CD4-positive, alpha-beta T cell (primary cell): ENCODE measurements at regions of chr7 and their contacts with region 1.

Region 1: DNA sequence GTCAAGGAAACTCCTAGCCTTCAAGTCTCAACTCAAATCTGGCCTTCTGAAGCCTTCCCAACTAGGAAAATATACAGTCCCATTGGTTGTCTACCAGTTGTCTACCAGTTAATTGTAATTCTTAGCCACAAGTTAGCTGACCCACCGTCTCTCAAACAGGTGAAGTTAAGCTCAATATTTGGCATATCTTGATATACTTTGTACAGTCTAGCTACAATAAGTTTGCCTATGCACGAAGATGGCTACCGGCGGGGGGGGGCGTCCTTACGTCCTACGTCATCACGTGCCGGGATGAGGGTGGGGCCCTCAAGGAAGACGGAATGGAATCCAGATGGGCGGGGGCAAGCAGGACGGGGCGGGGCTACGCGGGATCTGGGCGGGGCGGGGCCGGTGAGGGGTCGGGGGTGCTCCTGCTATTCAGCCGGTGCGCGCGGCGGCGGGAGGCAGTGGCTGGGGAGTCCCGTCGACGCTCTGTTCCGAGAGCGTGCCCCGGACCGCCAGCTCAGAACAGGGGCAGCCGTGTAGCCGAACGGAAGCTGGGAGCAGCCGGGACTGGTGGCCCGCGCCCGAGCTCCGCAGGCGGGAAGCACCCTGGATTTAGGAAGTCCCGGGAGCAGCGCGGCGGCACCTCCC is at the start of gene AHR:
- DNase-seq: peak; percentile 81 to 95 (median 86)
- ATAC-seq: peak; percentile 77
- H3K4me3 ChIP-seq: peak within 1 kb of the TSS; percentile 84
- H3K4me3 Mint-ChIP-seq: peak within 1 kb of the TSS; percentile 97
- H3K27ac ChIP-seq: peak within 1 kb of the TSS; percentile 74 to 91
- H3K27ac Mint-ChIP-seq: peak within 1 kb of the TSS; percentile 91
- H3K4me1 ChIP-seq: peaks cover 9% of the 10 kb centered on the region
- H3K4me1 Mint-ChIP-seq: peaks cover 39% of the 10 kb centered on the region
- H3K27me3 ChIP-seq: no peaks in the 10 kb centered on the region
- H3K27me3 Mint-ChIP-seq: no peaks in the 10 kb centered on the region
- CTCF ChIP-seq: no peak
- total RNA-seq, gene AHR: 95.2 to 95.7 TPM

Region 2: GRCh38 chr7:16645593-16646471 is 652.5 kb before region 1 on chr7 and contains the starts of genes ANKMY2 and BZW2:
- CTCF ChIA-PET with region 1: no interaction called
- POLR2A ChIA-PET with region 1: interaction called, 12 read pairs
- intact Hi-C with region 1: loop called (anchors 5 kb)
- DNase-seq: peak; percentile 85 to 98 (median 92)
- ATAC-seq: peak; percentile 85
- H3K4me3 ChIP-seq: peak within 1 kb of the TSS; percentile 89
- H3K4me3 Mint-ChIP-seq: peak within 1 kb of the TSS; percentile 99
- H3K27ac ChIP-seq: peak within 1 kb of the TSS; percentile 75 to 88
- H3K27ac Mint-ChIP-seq: peak within 1 kb of the TSS; percentile 90
- H3K4me1 ChIP-seq: peaks cover 28% of the 10 kb centered on the region
- H3K4me1 Mint-ChIP-seq: peaks cover 78% of the 10 kb centered on the region
- H3K27me3 ChIP-seq: no peaks in the 10 kb centered on the region
- H3K27me3 Mint-ChIP-seq: no peaks in the 10 kb centered on the region
- CTCF ChIP-seq: no peak
- total RNA-seq, gene ANKMY2: 3.3 to 5.1 TPM
- total RNA-seq, gene BZW2: 15.1 to 17.2 TPM

Region 3: GRCh38 chr7:16982640-16983350 is 315.5 kb before region 1 on chr7:
- CTCF ChIA-PET with region 1: interaction called, 13 read pairs
- POLR2A ChIA-PET with region 1: no interaction called
- intact Hi-C with region 1: loop called (anchors 1 to 5 kb)
- DNase-seq: peak in 10 of 14 experiments; percentile 1 to 68 (median 8)
- ATAC-seq: no peak
- H3K4me3 ChIP-seq: no peak overlapping the region
- H3K4me3 Mint-ChIP-seq: no peak overlapping the region
- H3K27ac ChIP-seq: no peak overlapping the region
- H3K27ac Mint-ChIP-seq: no peak overlapping the region
- H3K4me1 ChIP-seq: no peaks in the 10 kb centered on the region
- H3K4me1 Mint-ChIP-seq: no peaks in the 10 kb centered on the region
- H3K27me3 ChIP-seq: no peaks in the 10 kb centered on the region
- H3K27me3 Mint-ChIP-seq: peaks cover 5% of the 10 kb centered on the region
- CTCF ChIP-seq: peak; percentile 97

Region 4: DNA sequence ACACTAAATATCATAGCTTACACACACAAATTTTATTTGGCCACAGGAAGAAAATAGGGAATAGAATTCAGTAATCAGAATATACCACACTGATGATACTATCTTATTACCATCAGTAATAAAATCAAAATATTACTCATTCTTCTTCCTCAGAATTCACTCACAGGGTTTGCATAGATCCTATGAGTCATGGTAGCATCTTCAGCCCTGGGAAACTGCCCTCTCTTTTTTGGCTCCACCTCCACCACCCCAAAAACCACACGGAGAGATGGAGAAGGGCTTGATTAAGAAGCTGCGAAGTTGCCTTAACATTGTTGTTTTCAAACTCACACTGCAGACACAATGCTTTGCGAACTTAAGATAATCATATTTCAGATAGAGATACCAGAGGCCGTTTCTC is 154.0 kb before region 1 on chr7:
- CTCF ChIA-PET with region 1: interaction called, 6 read pairs
- POLR2A ChIA-PET with region 1: interaction called, 4 read pairs
- intact Hi-C with region 1: loop called in 1 of 2 experiments (anchors 5 kb)
- DNase-seq: peak; percentile 3 to 78 (median 38)
- ATAC-seq: peak; percentile 78
- H3K4me3 ChIP-seq: peak overlapping the region; percentile 8
- H3K4me3 Mint-ChIP-seq: peak overlapping the region; percentile 60
- H3K27ac ChIP-seq: no peak overlapping the region
- H3K27ac Mint-ChIP-seq: peak overlapping the region; percentile 75
- H3K4me1 ChIP-seq: peaks cover 21% of the 10 kb centered on the region
- H3K4me1 Mint-ChIP-seq: peaks cover 49% of the 10 kb centered on the region
- H3K27me3 ChIP-seq: no peaks in the 10 kb centered on the region
- H3K27me3 Mint-ChIP-seq: no peaks in the 10 kb centered on the region
- CTCF ChIP-seq: no peak

Region 5: DNA sequence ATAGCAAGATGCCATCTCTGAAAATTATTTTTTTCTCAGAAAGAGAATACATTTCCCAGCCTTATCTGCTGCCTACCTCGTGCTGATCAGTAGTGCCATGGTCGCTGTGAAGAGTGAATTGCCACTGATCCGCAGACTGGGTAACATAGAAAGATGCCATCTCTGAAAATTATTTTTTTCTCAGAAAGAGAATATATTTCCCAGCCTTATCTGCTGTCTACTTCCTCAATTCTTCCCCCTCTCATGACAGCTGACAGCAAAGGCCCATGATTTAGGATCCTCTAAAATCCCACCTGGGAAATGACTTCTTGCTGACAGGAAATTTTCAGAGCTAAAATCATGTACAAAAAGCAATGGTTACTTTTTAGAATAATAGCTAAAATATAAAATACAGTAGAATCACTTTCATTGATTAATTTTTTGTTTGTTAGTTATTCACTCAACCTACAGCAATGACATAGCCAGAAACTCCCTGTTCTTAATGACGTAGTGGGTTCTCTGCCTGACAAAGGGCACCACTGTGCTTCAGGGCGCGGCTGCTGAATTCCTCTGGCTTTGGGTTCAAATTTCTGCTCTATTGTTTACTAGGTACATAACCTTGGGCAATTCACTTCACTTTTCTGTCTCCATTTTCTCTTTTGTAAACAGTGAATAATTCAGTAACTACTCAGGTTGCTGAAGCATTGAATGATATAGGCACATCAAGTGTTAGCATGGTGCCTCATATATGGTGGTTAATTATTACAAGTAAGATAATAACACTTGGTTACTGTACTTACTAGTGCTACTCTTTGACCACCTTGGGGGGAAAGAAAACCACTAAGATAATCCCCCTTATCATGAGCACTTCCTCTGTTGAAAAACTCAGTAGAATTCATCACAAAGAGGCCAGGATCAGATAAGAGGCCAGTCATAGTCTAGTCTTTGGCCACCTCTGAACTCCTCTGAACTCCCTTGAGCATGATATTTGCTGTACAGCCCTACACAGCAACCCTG is 92.1 kb before region 1 on chr7:
- CTCF ChIA-PET with region 1: no interaction called
- POLR2A ChIA-PET with region 1: no interaction called
- intact Hi-C with region 1: no loop called
- DNase-seq: no peak
- ATAC-seq: no peak
- H3K4me3 ChIP-seq: no peak overlapping the region
- H3K4me3 Mint-ChIP-seq: no peak overlapping the region
- H3K27ac ChIP-seq: no peak overlapping the region
- H3K27ac Mint-ChIP-seq: no peak overlapping the region
- H3K4me1 ChIP-seq: no peaks in the 10 kb centered on the region
- H3K4me1 Mint-ChIP-seq: no peaks in the 10 kb centered on the region
- H3K27me3 ChIP-seq: no peaks in the 10 kb centered on the region
- H3K27me3 Mint-ChIP-seq: no peaks in the 10 kb centered on the region
- CTCF ChIP-seq: no peak

Region 6: GRCh38 chr7:17530741-17531417 is 232.6 kb after region 1 on chr7:
- CTCF ChIA-PET with region 1: no interaction called
- POLR2A ChIA-PET with region 1: no interaction called
- intact Hi-C with region 1: loop called in 1 of 2 experiments (anchors 10 kb)
- DNase-seq: peak in 3 of 14 experiments; percentile 13 to 21 (median 16)
- ATAC-seq: no peak
- H3K4me3 ChIP-seq: no peak overlapping the region
- H3K4me3 Mint-ChIP-seq: no peak overlapping the region
- H3K27ac ChIP-seq: no peak overlapping the region
- H3K27ac Mint-ChIP-seq: no peak overlapping the region
- H3K4me1 ChIP-seq: peaks cover 3% of the 10 kb centered on the region
- H3K4me1 Mint-ChIP-seq: no peaks in the 10 kb centered on the region
- H3K27me3 ChIP-seq: peaks cover 0 to 6% of the 10 kb centered on the region in 2 experiments
- H3K27me3 Mint-ChIP-seq: no peaks in the 10 kb centered on the region
- CTCF ChIP-seq: no peak